ENCODE measurements at regions of chr1 and their contacts with region 1.

Region 1: DNA sequence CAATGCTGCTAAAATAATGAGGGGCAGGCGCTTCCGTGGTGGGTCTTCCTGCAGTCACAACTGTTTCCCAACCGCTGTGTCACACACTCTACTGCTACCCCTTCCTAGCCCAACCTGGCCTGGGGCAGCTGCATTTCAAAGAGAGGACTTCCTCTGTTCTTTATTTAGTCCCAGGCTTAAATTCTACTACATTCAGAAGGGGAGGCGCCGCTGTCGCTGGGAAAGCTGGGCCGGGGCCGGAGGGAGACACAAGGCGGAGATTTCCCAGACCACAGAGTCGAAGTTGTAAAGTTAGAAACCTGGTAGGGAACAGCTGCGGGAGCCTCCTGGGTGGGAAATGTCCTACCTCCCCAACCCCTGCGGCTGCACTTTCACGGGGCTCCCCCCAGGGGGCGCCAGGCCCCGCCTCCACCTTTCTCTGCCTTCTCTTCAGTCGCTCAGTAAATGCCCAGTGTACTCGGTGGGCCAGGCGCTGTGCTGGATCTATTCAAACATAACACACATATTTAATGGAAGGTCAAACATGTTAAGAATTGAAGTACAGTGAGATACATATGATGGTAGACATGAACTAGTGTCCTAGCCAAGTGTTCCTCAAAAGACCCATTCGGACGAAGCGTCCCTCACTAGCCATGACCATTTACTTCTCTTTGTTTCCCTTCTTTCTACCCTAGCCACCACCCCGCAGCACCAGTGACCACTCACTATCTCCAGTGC is 23.1 kb downstream of the DYRK3 start:
- DNase-seq: peak; percentile 76
- ATAC-seq: peak; percentile 66

Region 2: GRCh38 chr1:206693029-206693428 is 34.6 kb after region 1 on chr1:
- intact Hi-C with region 1: loop called (anchors 5 kb)
- DNase-seq: peak; percentile 92
- ATAC-seq: peak; percentile 83

Region 3: GRCh38 chr1:206725109-206725963 is 66.9 kb after region 1 on chr1:
- intact Hi-C with region 1: loop called (anchors 2 kb)
- DNase-seq: no peak
- ATAC-seq: peak; percentile 9